ENCODE measurements at regions of chr14 and their contacts with region 1.

Region 1: GRCh38 chr14:105527661-105528581 is 1.5 kb downstream of the TMEM121 start:
- DNase-seq: peak; percentile 79 to 87 (median 80)
- ATAC-seq: peak; percentile 91
- H3K4me3 ChIP-seq: peak overlapping the region; percentile 31
- H3K27ac ChIP-seq: no peak overlapping the region
- H3K4me1 ChIP-seq: peaks cover 0 to 53% of the 10 kb centered on the region in 2 experiments; a peak in 2 of 5 replicates
- H3K27me3 ChIP-seq: peaks cover 2 to 23% of the 10 kb centered on the region in 2 experiments; a peak in 2 of 5 replicates
- CTCF ChIP-seq: peak; percentile 62 to 92 (median 78)
- EP300 ChIP-seq: no peak
- POLR2A ChIP-seq: no peak
- RAD21 ChIP-seq: peak; percentile 69 to 80

Region 2: GRCh38 chr14:105375635-105376057 is 152.3 kb before region 1 on chr14:
- CTCF ChIA-PET with region 1: interaction called, 13 read pairs
- POLR2A ChIA-PET with region 1: no interaction called
- in situ Hi-C with region 1: no loop called
- intact Hi-C with region 1: loop called (anchors 5 kb)
- DNase-seq: no peak
- ATAC-seq: no peak
- H3K4me3 ChIP-seq: no peak overlapping the region
- H3K27ac ChIP-seq: no peak overlapping the region
- H3K4me1 ChIP-seq: peaks cover 8 to 29% of the 10 kb centered on the region in 2 experiments; a peak in 4 of 5 replicates
- H3K27me3 ChIP-seq: no peaks in the 10 kb centered on the region
- CTCF ChIP-seq: no peak
- EP300 ChIP-seq: no peak
- POLR2A ChIP-seq: no peak
- RAD21 ChIP-seq: no peak

Region 3: DNA sequence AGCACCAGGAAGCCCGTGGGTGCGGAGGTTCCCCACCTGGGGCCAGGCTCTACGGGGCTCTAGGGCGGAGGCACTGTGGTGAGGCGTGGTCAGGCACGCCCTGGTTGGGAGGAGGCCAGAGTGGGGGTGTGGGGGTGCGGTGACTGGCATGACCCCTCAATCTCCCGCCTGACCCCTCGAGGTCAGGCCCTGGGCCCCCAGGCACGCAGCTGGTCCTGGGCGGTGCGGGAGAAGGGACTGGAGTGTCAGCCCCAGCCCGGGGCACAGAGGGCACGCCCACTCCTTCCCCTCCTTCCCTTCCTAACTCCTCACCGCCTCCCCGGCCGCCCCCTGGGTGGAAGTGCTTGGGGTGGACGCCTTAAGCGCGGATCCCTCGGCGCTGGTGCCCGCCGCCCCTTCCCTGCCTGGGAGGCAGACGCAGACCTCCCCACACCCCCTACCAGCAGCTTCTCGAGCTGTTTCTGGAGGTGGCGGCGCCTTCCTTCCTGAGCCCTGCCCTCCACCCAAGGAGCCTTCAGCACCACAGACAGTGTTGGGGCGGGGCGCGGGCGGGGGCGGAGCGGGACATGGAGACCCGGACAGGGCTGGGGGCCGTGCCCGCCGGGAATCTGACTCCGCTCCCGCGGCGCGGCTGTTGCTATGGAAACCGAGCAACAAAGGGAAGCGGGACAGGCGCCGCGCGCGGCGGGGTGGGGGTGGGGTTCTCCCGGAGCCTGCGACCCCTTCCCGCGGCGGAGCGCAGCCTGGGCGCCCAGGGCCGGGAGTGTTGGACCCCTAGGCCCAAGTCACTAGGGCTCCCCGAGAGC is 54.0 kb before region 1 on chr14:
- CTCF ChIA-PET with region 1: no interaction called
- POLR2A ChIA-PET with region 1: no interaction called
- in situ Hi-C with region 1: no loop called
- intact Hi-C with region 1: loop called (anchors 10 kb)
- DNase-seq: peak; percentile 78 to 85 (median 80)
- ATAC-seq: peak; percentile 85
- H3K4me3 ChIP-seq: peak overlapping the region; percentile 39
- H3K27ac ChIP-seq: no peak overlapping the region
- H3K4me1 ChIP-seq: peaks cover 0 to 90% of the 10 kb centered on the region in 2 experiments; a peak in 2 of 5 replicates
- H3K27me3 ChIP-seq: peaks cover 0 to 7% of the 10 kb centered on the region in 2 experiments; a peak in 1 of 5 replicates
- CTCF ChIP-seq: no peak
- EP300 ChIP-seq: no peak
- POLR2A ChIP-seq: no peak
- RAD21 ChIP-seq: no peak

Region 4: DNA sequence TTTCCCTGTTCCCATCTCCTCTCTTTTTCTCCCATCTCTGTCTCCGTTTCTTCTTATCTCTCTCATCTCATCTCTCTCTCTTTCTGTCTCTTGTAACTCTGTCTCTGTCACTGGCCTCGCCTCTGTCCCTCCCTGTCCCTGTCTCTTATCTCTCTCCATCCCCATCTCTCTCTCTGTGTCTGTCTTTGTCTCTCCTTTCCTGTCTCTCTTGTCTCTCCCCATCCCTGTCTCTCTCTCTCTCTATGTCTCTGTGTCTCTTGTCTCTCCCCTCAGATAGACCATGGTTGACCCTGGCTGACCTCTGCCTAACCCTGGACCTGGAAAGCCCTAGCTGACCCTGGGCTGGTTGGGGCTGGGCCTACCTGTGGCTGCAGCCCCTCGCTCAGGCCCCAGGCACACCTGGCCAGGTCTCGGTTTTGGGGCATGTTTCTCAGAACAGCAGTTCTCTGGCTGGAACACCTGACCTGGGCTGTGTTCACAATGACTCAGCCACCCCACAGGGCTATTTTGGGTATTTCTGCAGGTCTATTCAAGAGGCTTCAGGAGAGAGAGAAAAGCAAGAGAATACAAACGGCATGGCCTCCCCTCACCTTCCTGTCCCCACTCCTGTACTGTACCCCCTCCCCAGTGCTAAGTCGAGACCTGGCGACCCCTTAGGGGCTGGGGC is 172.8 kb after region 1 on chr14:
- CTCF ChIA-PET with region 1: no interaction called
- POLR2A ChIA-PET with region 1: no interaction called
- in situ Hi-C with region 1: no loop called
- intact Hi-C with region 1: no loop called
- DNase-seq: no peak
- ATAC-seq: no peak
- H3K4me3 ChIP-seq: no peak overlapping the region
- H3K27ac ChIP-seq: no peak overlapping the region
- H3K4me1 ChIP-seq: no peaks in the 10 kb centered on the region
- H3K27me3 ChIP-seq: no peaks in the 10 kb centered on the region
- CTCF ChIP-seq: no peak
- EP300 ChIP-seq: no peak
- POLR2A ChIP-seq: no peak
- RAD21 ChIP-seq: no peak

Measured in K562 (cell line).